Activated naive CD4-positive, alpha-beta T cell treated with anti-CD3 and anti-CD28 coated beads for 36 hours (primary cell): ENCODE measurements at regions of chr6 and their contacts with region 1.

Region 1: DNA sequence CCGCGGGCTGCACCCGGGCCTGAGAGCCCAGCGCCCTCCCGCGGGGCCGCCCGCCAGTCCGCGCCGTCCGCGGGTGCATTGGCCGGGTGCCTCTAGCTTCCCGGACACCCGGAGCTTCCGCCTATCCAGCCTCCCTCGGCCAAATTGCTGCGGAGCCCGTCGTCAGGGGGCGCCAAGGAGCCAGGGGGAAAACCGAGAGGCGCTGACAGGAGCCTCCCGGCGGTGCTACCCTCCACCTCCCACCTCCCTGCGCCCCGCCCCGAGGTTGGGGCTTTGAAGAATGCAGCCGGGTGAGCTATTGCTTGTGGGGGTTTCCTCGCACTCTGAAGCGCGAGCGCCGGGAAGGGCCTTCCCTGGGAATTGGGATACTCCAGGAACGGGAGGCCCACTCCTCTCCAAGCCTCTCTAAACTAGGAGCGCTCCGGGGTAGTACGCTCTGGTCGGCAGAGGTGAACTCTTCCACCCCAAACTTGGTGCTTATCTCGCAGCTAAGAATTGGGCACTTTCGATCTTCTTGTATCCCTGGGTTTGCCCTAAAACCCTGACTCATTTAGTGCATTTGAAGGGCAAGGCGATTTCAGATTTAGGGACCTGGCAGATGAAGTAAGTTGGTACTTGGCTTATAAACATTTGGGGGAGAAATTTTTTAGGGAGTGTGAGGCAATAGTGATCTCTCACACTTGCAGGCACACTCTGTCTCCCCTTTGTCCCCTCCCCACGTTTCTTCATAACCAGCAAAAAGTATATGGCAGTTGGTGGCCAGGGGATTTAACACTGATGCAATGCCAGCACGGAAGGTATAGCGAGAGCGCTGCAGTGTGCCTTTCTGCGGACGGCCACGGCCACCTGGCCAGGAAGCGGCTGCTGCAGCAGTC is 501 bp downstream of the BEND6 start:
- DNase-seq: peak; percentile 85
- H3K4me3 Mint-ChIP-seq: peak overlapping the region; percentile 74
- H3K27ac Mint-ChIP-seq: no peak overlapping the region
- H3K4me1 Mint-ChIP-seq: peaks cover 8% of the 10 kb centered on the region
- H3K27me3 Mint-ChIP-seq: peaks cover 60% of the 10 kb centered on the region

Region 2: DNA sequence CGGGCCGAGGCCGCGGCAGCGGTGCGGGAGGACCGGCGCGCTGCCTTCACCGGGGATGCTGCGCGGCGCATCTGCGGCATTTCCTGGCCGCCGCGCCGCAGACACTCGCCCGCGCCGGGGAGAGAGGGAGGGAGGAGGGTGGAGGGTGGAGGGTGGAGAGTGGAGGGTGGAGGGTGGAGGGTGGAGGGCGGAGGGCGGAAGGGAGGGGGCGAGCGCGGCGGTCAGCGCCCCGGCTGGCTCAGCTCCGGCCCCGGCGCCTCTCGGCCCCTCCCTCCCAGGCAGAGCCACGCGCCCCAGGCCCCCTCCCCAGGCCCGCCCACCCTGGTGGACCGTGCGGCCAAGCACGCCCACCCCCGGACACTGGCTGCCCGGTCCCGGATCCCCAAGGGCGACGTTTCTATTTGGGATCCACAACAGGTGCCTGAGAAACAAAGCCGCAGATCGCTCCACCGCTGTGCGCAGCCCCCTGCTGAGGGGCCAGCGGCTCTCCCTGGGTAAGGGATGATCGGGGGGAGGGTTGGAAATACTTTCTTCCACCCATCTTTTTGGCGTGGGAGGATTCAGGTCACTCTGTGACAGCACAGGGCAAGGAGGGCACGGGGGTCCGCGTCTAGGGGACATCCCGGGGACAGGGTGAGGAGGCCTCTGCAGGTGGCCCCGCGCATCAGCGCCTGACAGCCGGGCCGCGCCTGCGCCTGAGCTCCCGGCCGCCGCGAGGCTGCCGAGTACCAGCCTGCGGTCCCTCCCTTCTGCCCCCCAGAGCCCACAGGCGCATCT is 111.6 kb before region 1 on chr6:
- CTCF ChIA-PET with region 1: no interaction called
- intact Hi-C with region 1: loop called (anchors 1 kb)
- DNase-seq: peak; percentile 71
- H3K4me3 Mint-ChIP-seq: peak overlapping the region; percentile 77
- H3K27ac Mint-ChIP-seq: no peak overlapping the region
- H3K4me1 Mint-ChIP-seq: peaks cover 6% of the 10 kb centered on the region
- H3K27me3 Mint-ChIP-seq: peaks cover 32% of the 10 kb centered on the region

Region 3: GRCh38 chr6:56902641-56903464 is 52.6 kb before region 1 on chr6:
- CTCF ChIA-PET with region 1: interaction called, 18 read pairs
- intact Hi-C with region 1: loop called (anchors 1 kb)
- DNase-seq: no peak
- H3K4me3 Mint-ChIP-seq: no peak overlapping the region
- H3K27ac Mint-ChIP-seq: no peak overlapping the region
- H3K4me1 Mint-ChIP-seq: peaks cover 2% of the 10 kb centered on the region
- H3K27me3 Mint-ChIP-seq: peaks cover 5% of the 10 kb centered on the region

Region 4: GRCh38 chr6:56970849-56971248 is 15.4 kb after region 1 on chr6:
- CTCF ChIA-PET with region 1: no interaction called
- intact Hi-C with region 1: no loop called
- DNase-seq: no peak
- H3K4me3 Mint-ChIP-seq: no peak overlapping the region
- H3K27ac Mint-ChIP-seq: no peak overlapping the region
- H3K4me1 Mint-ChIP-seq: no peaks in the 10 kb centered on the region
- H3K27me3 Mint-ChIP-seq: peaks cover 2% of the 10 kb centered on the region

Region 5: GRCh38 chr6:57013521-57013926 is 58.1 kb after region 1 on chr6:
- CTCF ChIA-PET with region 1: no interaction called
- intact Hi-C with region 1: no loop called
- DNase-seq: no peak
- H3K4me3 Mint-ChIP-seq: no peak overlapping the region
- H3K27ac Mint-ChIP-seq: no peak overlapping the region
- H3K4me1 Mint-ChIP-seq: no peaks in the 10 kb centered on the region
- H3K27me3 Mint-ChIP-seq: no peaks in the 10 kb centered on the region

Region 6: GRCh38 chr6:57048577-57048976 is 93.2 kb after region 1 on chr6:
- CTCF ChIA-PET with region 1: no interaction called
- intact Hi-C with region 1: loop called (anchors 1 kb)
- DNase-seq: no peak
- H3K4me3 Mint-ChIP-seq: peak overlapping the region; percentile 68
- H3K27ac Mint-ChIP-seq: no peak overlapping the region
- H3K4me1 Mint-ChIP-seq: peaks cover 21% of the 10 kb centered on the region
- H3K27me3 Mint-ChIP-seq: peaks cover 14% of the 10 kb centered on the region

Region 7: DNA sequence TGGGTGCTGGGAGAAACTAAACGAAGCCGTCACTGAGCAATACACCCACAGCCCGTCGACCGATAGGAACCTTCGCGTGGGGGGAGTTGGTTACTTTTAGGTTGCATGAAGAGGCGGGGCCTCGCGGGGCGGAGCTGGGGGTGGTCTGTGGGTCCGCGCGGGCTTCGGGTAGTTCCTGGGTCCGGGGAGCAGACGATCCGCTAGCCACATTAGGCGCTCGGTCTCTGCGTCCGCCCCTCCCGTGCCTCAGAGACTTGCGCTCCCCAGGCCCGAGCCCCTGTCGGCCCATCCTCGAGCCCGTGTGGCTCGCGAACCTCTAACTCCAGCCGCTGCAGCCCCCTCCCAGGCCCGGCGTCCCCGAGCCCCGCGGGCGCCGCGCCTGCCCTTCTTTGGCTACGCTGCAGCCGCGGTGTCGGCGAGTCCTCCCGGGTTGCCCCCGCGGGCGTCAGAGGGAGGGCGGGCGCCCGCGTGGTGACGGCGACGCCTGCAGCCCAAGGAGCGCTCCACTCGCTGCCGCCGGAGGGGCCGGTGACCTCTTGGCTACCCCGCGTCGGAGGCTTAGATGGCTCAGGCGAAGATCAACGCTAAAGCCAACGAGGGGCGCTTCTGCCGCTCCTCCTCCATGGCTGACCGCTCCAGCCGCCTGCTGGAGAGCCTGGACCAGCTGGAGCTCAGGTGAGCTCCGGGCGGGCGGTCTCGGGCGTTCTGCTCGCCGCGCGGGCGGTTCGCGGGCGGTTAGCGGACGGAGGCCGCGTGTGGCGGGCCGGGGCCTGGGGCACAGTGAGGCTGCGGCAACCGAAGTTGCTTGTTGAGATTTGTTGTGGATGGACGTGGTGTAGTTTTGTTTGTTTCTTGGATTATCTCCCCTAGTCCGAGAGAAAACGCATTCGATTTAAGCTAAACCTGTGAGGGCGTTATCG is 217.0 kb after region 1 on chr6 and contains the start of gene BAG2:
- CTCF ChIA-PET with region 1: no interaction called
- intact Hi-C with region 1: loop called (anchors 1 kb)
- DNase-seq: peak; percentile 88
- H3K4me3 Mint-ChIP-seq: peak within 1 kb of the TSS; percentile 92
- H3K27ac Mint-ChIP-seq: peak within 1 kb of the TSS; percentile 85
- H3K4me1 Mint-ChIP-seq: peaks cover 31% of the 10 kb centered on the region
- H3K27me3 Mint-ChIP-seq: no peaks in the 10 kb centered on the region
- total RNA-seq, gene BAG2: 6.8 to 7.0 TPM

Region 8: DNA sequence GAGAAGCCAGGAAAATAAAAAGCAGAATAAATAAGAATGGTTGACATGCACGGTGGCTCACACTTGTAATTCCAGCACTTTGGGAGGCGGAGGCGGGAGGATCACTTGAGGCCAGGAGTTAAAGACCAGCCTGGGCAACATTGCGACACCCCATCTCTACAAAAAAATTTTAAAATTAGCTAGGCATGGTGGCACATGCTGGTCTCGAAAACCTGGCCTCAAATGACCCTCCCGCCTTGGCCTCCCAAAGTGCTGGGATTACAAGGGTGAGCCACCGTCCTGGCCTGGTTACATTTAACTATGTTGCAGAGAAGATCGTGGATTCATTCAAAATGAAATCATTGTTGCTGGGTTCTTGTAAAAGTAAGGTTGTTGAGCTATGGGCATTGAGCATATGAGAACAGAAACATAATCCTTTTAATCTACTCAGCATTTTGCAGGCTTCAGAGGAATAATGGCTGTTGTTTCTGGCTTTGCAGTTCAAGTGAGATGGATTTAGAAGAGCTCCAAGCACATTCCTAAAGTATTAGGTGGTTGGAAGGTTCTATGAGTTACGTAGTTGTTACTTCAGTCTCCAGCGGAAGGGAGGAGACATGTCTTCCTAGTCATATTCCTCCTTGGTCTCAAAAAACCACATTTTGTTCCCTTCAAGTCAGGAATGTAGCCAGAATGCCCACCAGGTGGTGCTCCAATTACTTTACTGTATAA is 312.3 kb after region 1 on chr6:
- CTCF ChIA-PET with region 1: no interaction called
- intact Hi-C with region 1: loop called (anchors 1 kb)
- DNase-seq: peak; percentile 68
- H3K4me3 Mint-ChIP-seq: no peak overlapping the region
- H3K27ac Mint-ChIP-seq: no peak overlapping the region
- H3K4me1 Mint-ChIP-seq: peaks cover 20% of the 10 kb centered on the region
- H3K27me3 Mint-ChIP-seq: peaks cover 10% of the 10 kb centered on the region